H1 (cell line): ENCODE measurements at regions of chr5 and their contacts with region 1.

Region 1: DNA sequence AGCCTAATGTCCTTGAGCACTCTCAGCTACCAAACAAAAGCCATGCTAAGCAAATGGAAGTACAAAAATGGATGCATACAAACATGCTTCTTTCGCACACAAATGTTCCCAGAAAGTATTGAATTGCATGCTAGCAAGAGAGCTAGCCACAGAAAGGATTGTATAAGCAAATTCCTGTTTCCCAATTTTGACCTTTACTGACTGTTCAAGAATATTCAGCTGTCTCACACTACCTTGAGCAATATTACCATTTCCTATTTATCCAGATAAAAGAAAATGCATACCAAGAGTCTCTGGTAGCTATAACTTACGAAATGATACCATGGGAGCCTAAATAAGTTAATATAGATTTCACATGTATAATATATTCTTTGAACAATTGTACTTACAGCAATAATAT is 264.6 kb downstream of the TMEM167A start:
- DNase-seq: no peak
- H3K4me3 ChIP-seq: no peak overlapping the region
- H3K27ac ChIP-seq: no peak overlapping the region
- H3K4me1 ChIP-seq: peaks cover 0 to 10% (median 3%) of the 10 kb centered on the region in 4 experiments; a peak in 3 of 7 replicates
- H3K27me3 ChIP-seq: no peaks in the 10 kb centered on the region
- CTCF ChIP-seq: no peak
- EP300 ChIP-seq: no peak
- POLR2A ChIP-seq: no peak
- RAD21 ChIP-seq: no peak

Region 2: GRCh38 chr5:82765765-82766164 is 46.8 kb before region 1 on chr5:
- CTCF ChIA-PET with region 1: no interaction called
- POLR2A ChIA-PET with region 1: no interaction called
- DNase-seq: no peak
- H3K4me3 ChIP-seq: no peak overlapping the region
- H3K27ac ChIP-seq: no peak overlapping the region
- H3K4me1 ChIP-seq: no peaks in the 10 kb centered on the region; a peak in 1 of 7 replicates
- H3K27me3 ChIP-seq: no peaks in the 10 kb centered on the region
- CTCF ChIP-seq: no peak
- EP300 ChIP-seq: no peak
- POLR2A ChIP-seq: no peak
- RAD21 ChIP-seq: no peak

Region 3: GRCh38 chr5:82799361-82800080 is 13.1 kb before region 1 on chr5:
- CTCF ChIA-PET with region 1: interaction called, 10 read pairs
- POLR2A ChIA-PET with region 1: no interaction called
- DNase-seq: no peak
- H3K4me3 ChIP-seq: no peak overlapping the region
- H3K27ac ChIP-seq: no peak overlapping the region
- H3K4me1 ChIP-seq: peaks cover 0 to 9% (median 3%) of the 10 kb centered on the region in 4 experiments; a peak in 6 of 7 replicates
- H3K27me3 ChIP-seq: no peaks in the 10 kb centered on the region
- CTCF ChIP-seq: peak in 1 of 3 experiments; percentile 26; a peak in 1 of 4 replicates
- EP300 ChIP-seq: no peak
- POLR2A ChIP-seq: no peak
- RAD21 ChIP-seq: no peak

Region 4: GRCh38 chr5:82931110-82931509 is 118.5 kb after region 1 on chr5:
- CTCF ChIA-PET with region 1: no interaction called
- POLR2A ChIA-PET with region 1: no interaction called
- DNase-seq: no peak
- H3K4me3 ChIP-seq: no peak overlapping the region
- H3K27ac ChIP-seq: no peak overlapping the region
- H3K4me1 ChIP-seq: no peaks in the 10 kb centered on the region
- H3K27me3 ChIP-seq: no peaks in the 10 kb centered on the region
- CTCF ChIP-seq: no peak
- EP300 ChIP-seq: no peak
- POLR2A ChIP-seq: no peak
- RAD21 ChIP-seq: no peak